AG04450 (cell line): ENCODE measurements at regions of chr14 and their contacts with region 1.

Region 1: DNA sequence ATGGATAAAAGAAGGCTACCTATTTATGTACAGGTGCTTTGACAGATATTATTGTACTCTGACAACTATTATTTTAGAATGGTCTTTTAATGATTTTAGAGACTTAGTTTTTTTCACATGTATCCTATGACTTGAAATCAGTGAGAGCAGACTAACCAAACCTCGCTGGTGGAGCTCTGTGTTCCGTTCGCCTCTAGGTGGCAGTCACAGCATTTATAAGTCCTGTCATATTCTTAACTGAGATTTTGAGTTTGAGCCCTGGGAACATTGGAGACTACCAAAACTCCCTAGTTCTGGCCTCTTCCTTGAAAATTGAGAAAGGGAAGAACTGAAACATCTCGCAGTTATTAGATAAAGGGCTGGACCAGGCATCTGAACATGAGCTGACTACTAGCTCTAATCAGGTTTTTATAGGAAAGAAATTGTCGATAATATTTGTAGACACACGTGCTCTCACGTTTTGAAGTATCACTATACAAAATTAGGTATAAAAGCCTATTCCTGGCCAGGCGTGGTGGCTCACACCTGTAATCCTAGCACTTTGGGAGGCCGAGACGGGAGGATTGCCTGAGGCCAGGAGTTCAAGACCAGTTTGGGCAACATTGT is 48.3 kb downstream of the TTLL5 start:
- DNase-seq: peak; percentile 63
- H3K4me3 ChIP-seq: no peak overlapping the region
- H3K27ac ChIP-seq: no peak overlapping the region
- H3K27me3 ChIP-seq: no peaks in the 10 kb centered on the region
- CTCF ChIP-seq: peak; percentile 80

Region 2: DNA sequence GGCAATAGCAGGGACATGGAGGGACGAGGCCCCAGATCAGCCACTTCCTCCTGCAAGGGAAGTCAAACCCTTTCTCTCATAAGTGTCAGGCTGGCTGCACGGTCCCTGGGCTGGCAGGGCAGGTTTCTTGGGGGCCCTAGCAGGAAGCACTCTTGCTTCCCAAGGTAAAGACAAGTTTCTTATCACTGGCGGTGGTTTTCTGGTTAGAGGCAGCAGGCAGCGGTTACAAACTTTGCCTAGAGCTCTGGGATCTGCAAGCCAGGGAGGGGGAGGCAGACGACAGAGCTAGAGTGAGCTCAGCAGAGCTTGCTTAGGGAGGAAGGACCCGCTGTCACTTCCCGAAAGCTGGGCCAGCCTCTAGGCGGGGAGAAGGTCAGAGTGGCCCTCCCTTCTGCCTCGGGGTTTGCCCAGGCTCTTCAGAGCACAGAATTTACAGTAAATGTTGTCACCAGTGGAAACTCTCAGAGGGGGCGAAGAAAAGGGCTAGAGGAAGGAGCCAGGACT is 166.7 kb before region 1 on chr14:
- CTCF ChIA-PET with region 1: no interaction called
- POLR2A ChIA-PET with region 1: no interaction called
- DNase-seq: no peak
- H3K4me3 ChIP-seq: no peak overlapping the region
- H3K27ac ChIP-seq: no peak overlapping the region
- H3K27me3 ChIP-seq: peaks cover 5% of the 10 kb centered on the region
- CTCF ChIP-seq: no peak

Region 3: GRCh38 chr14:75685910-75686309 is 23.4 kb before region 1 on chr14:
- CTCF ChIA-PET with region 1: interaction called, 15 read pairs
- POLR2A ChIA-PET with region 1: no interaction called
- DNase-seq: no peak
- H3K4me3 ChIP-seq: no peak overlapping the region
- H3K27ac ChIP-seq: no peak overlapping the region
- H3K27me3 ChIP-seq: no peaks in the 10 kb centered on the region
- CTCF ChIP-seq: no peak

Region 4: GRCh38 chr14:75757644-75758402 is 48.5 kb after region 1 on chr14:
- CTCF ChIA-PET with region 1: interaction called, 10 read pairs
- POLR2A ChIA-PET with region 1: no interaction called
- DNase-seq: no peak
- H3K4me3 ChIP-seq: no peak overlapping the region
- H3K27ac ChIP-seq: no peak overlapping the region
- H3K27me3 ChIP-seq: no peaks in the 10 kb centered on the region
- CTCF ChIP-seq: no peak

Region 5: GRCh38 chr14:75800792-75801191 is 91.5 kb after region 1 on chr14:
- CTCF ChIA-PET with region 1: interaction called, 10 read pairs
- POLR2A ChIA-PET with region 1: no interaction called
- DNase-seq: no peak
- H3K4me3 ChIP-seq: no peak overlapping the region
- H3K27ac ChIP-seq: no peak overlapping the region
- H3K27me3 ChIP-seq: no peaks in the 10 kb centered on the region
- CTCF ChIP-seq: no peak

Region 6: GRCh38 chr14:75982266-75983018 is 273.1 kb after region 1 on chr14:
- CTCF ChIA-PET with region 1: interaction called, 484 read pairs
- POLR2A ChIA-PET with region 1: interaction called, 11 read pairs
- DNase-seq: peak; percentile 50
- H3K4me3 ChIP-seq: peak overlapping the region; percentile 66
- H3K27ac ChIP-seq: peak overlapping the region; percentile 74
- H3K27me3 ChIP-seq: peaks cover 3% of the 10 kb centered on the region
- CTCF ChIP-seq: peak; percentile 65

Region 7: DNA sequence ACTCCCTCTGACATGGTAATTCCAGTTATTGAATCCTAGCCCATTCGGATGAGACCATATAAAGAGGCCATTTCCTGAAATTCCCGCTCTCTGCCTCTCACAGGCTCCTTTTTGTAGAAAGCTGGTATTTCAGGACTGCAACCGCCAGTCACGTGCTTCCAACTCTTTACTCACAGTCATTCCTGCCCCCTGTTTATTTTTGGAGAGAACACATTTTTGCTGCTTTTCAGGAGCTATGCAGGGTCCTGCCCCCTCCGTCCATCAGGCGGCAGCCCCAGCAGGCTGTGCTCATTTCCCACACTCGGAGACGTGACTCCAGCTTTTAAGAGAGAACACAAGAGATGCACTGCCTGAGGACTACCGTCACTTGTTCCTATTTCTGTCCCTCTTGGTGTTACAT is 303.0 kb after region 1 on chr14:
- CTCF ChIA-PET with region 1: interaction called, 37 read pairs
- POLR2A ChIA-PET with region 1: no interaction called
- DNase-seq: peak; percentile 66
- H3K4me3 ChIP-seq: no peak overlapping the region
- H3K27ac ChIP-seq: peak overlapping the region; percentile 43
- H3K27me3 ChIP-seq: no peaks in the 10 kb centered on the region
- CTCF ChIP-seq: peak; percentile 27

Region 8: DNA sequence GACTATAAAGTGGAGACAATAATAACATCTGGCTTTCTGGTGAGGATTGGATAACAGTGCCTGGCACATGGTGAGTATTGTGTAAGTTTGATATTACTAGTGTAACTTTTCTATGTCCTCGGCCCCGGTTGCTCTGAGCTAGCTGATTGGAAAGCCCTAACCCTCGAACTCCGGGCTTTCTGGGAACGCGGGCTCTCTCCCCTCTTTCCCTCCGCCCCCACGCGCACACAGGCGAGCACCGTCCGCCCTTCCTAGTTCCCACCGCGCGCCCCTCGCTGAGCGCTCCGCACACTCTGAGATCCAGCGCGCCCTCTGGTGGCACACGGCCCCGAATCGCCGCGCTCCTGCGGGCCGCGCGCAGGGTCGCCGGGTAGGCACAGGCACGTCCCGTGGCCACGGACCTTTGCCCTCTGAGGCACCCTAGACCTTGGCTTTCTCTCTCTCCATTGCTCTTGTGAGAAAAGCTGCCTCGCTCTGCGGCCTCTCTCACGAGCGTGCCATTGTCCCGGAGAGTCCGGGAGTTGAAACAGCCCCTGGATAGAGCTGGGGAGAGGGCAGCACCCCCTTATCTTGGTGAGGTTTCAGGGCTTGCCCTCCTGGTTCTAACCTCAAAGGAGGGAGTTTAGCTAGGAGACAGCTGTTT is 643.5 kb after region 1 on chr14:
- CTCF ChIA-PET with region 1: interaction called, 66 read pairs
- POLR2A ChIA-PET with region 1: no interaction called
- DNase-seq: no peak
- H3K4me3 ChIP-seq: peak overlapping the region; percentile 37
- H3K27ac ChIP-seq: no peak overlapping the region
- H3K27me3 ChIP-seq: peaks cover 6% of the 10 kb centered on the region
- CTCF ChIP-seq: peak; percentile 75